Gastrocnemius medialis (tissue), 4 donors: ENCODE measurements at regions of chr20 and their contacts with region 1.

Region 1: DNA sequence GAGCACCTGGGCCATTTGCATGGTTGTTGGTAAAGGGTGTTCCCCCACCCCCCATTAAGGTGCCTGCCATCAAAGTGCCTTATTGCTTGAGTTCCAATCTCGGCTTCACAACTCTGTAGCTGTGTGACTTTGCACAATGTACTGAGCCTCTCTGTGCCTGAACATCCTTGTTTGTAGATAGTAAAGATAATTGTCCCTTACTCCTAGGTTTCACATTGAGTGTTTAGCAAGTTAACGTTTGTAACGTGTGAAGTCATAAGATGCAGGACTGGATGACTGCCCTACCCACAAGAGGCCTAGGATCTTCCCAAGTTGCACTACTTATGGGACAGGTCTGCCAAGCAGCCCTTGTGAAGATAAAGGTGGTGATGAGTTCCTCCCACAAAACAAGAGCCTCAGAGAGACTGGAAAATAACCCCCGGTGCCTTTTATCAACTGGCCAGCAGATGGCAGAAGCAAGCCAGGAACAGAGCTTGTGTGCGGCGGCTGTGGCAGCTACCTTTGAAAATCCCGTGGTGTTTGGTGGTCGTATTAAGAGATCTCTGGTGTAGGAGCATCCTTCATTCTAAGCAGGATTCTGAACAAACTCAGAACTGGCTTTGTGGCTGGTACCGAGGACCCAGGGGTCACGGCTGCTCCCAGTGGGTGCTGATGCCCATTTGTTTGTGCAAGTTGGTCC is 99.0 kb downstream of the CDH26 start:
- DNase-seq: peak in 1 of 2 donors; percentile 63
- ATAC-seq: peak; percentile 28 to 29
- H3K4me3 ChIP-seq: peak overlapping the region in 2 of 4 donors; percentile 22 to 32
- H3K27ac ChIP-seq: peak overlapping the region; percentile 75 to 93 (median 88)
- H3K4me1 ChIP-seq: peaks cover 46 to 54% of the 10 kb centered on the region in 2 donors
- H3K27me3 ChIP-seq: no peaks in the 10 kb centered on the region
- CTCF ChIP-seq: peak; percentile 78 to 92 (median 80)
- POLR2A ChIP-seq: no peak

Region 2: DNA sequence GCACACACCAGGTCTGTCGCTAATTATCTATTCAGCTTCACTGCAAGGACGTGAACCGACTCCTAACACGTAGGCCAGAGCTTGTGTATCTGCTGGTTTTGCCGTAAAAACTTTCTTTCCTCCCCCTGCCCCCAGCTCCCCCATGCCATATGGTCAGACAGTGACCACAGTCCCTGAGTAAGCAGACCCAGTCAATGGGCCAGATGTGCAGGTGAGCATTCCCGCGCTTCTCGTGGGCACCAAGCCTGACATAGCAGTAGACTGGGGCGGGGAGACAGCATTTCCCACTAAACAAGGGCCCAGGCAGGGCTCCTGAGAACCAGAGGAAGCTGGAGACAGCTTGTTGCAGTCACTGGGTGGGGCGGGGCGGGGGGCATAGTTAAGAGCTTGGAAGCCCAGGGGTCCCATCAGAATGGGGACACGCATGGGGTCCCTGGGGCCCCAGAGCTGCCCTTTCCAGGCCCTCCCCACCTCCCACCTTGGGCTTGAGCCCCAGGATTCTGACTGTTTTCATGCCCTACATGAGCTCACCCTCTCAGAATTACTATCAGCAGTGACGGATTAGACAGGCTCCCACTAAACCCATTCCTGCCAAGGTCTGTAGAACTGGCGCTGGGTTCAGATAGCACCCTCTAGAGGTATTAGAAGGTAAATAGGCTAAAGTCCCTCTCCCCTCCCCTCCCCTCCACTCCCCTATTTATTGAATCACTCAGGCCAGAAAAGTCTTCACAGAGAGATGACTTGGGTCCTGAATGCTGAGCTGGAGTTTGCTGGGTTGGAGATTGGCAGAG is 47.2 kb before region 1 on chr20:
- in situ Hi-C with region 1: no loop called
- intact Hi-C with region 1: no loop called
- DNase-seq: no peak
- ATAC-seq: no peak
- H3K4me3 ChIP-seq: no peak overlapping the region
- H3K27ac ChIP-seq: no peak overlapping the region
- H3K4me1 ChIP-seq: peaks cover 9 to 14% of the 10 kb centered on the region in 2 donors
- H3K27me3 ChIP-seq: no peaks in the 10 kb centered on the region
- CTCF ChIP-seq: no peak
- POLR2A ChIP-seq: no peak

Region 3: GRCh38 chr20:60117065-60117464 is 59.8 kb after region 1 on chr20:
- in situ Hi-C with region 1: loop called in 1 of 4 experiments (anchors 10 kb)
- intact Hi-C with region 1: loop called (anchors 5 kb)
- DNase-seq: peak in 1 of 2 donors; percentile 36
- ATAC-seq: peak; percentile 93 to 97
- H3K4me3 ChIP-seq: no peak overlapping the region
- H3K27ac ChIP-seq: peak overlapping the region; percentile 36 to 60 (median 58)
- H3K4me1 ChIP-seq: peaks cover 13 to 26% of the 10 kb centered on the region in 2 donors
- H3K27me3 ChIP-seq: no peaks in the 10 kb centered on the region
- CTCF ChIP-seq: no peak
- POLR2A ChIP-seq: no peak

Region 4: DNA sequence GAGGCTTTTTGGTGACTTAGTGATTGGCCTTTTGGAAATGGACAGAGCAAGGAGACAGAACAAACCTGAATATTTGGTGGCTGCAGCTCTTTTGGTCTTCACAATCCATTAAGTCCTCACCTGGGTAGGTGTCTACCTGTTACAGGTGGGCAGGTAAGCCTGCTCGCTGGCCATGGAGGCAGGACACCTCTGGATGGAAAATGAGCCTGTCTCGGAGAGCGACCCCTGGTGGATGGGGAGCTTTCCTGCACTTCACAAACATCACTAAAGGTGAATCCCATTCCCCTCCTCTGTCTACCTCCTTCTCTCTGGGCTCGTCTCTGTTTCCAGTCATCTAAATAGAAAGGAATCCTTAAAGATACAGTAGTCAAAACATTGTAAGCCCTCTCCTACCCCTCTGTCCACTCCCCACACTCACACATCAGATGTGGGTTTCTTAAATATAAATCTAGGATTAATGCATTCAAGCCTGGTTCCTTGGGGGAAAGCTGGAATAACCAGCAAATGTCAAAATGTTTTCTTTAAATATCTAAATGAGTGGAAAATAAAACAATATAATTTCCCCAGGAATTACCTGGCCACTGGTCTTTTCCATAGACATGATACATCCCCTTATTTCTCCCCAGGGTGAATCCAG is 205.8 kb after region 1 on chr20:
- in situ Hi-C with region 1: loop called in 2 of 4 experiments (anchors 10 to 25 kb)
- intact Hi-C with region 1: loop called (anchors 5 kb)
- DNase-seq: no peak
- ATAC-seq: no peak
- H3K4me3 ChIP-seq: no peak overlapping the region
- H3K27ac ChIP-seq: no peak overlapping the region
- H3K4me1 ChIP-seq: no peaks in the 10 kb centered on the region
- H3K27me3 ChIP-seq: no peaks in the 10 kb centered on the region
- CTCF ChIP-seq: peak in 4 of 5 experiments; percentile 23 to 60 (median 53)
- POLR2A ChIP-seq: no peak

Region 5: DNA sequence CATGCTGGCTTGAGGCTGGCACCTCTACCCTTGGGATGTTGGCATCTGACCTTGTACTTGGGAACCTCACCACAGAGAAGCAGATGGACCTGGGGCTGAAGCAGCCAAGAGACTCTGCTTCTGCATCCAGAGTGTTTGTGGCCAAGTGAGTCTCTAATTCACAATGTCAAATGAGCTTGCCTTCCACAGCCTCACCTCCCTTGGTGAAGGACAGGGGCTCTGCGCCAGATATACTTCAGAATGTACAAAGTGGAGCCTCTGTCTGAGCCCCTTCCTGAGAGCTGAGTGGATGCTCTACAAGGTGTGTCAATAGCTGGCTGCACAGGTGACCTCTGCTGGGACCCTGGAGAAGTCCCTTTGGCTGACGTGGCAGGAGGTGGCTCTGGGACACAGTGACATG is 409.8 kb after region 1 on chr20:
- in situ Hi-C with region 1: no loop called
- intact Hi-C with region 1: no loop called
- DNase-seq: no peak
- ATAC-seq: no peak
- H3K4me3 ChIP-seq: no peak overlapping the region
- H3K27ac ChIP-seq: no peak overlapping the region
- H3K4me1 ChIP-seq: no peaks in the 10 kb centered on the region
- H3K27me3 ChIP-seq: no peaks in the 10 kb centered on the region
- CTCF ChIP-seq: no peak
- POLR2A ChIP-seq: no peak

Region 6: GRCh38 chr20:61263084-61263695 is 1205.9 kb after region 1 on chr20:
- in situ Hi-C with region 1: no loop called
- intact Hi-C with region 1: loop called (anchors 10 kb)
- DNase-seq: no peak
- ATAC-seq: no peak
- H3K4me3 ChIP-seq: no peak overlapping the region
- H3K27ac ChIP-seq: no peak overlapping the region
- H3K4me1 ChIP-seq: no peaks in the 10 kb centered on the region
- H3K27me3 ChIP-seq: no peaks in the 10 kb centered on the region
- CTCF ChIP-seq: peak in 4 of 5 experiments; percentile 24 to 59 (median 37)
- POLR2A ChIP-seq: no peak